Activated CD4-positive, alpha-beta T cell treated with anti-CD3 and anti-CD28 coated beads, Interleukin-2, amount 10 ng/mL, durations not matched to agents 24 days and 14 days (primary cell): ENCODE measurements at regions of chr16 and their contacts with region 1.

Region 1: GRCh38 chr16:67806428-67807147 is at the starts of genes RANBP10 and TSNAXIP1:
- DNase-seq: peak; percentile 99
- H3K4me3 Mint-ChIP-seq: peak within 1 kb of the TSS; percentile 97
- H3K27ac Mint-ChIP-seq: peak within 1 kb of the TSS; percentile 97
- H3K4me1 Mint-ChIP-seq: peaks cover 37% of the 10 kb centered on the region
- H3K27me3 Mint-ChIP-seq: peaks cover 2% of the 10 kb centered on the region
- total RNA-seq, gene RANBP10: 18.2 and 18.6 TPM in 2 replicates
- total RNA-seq, gene TSNAXIP1: 0.65 and 0.80 TPM in 2 replicates

Region 2: GRCh38 chr16:67470359-67470758 is 336.2 kb before region 1 on chr16:
- intact Hi-C with region 1: no loop called
- DNase-seq: no peak
- H3K4me3 Mint-ChIP-seq: no peak overlapping the region
- H3K27ac Mint-ChIP-seq: no peak overlapping the region
- H3K4me1 Mint-ChIP-seq: peaks cover 6% of the 10 kb centered on the region
- H3K27me3 Mint-ChIP-seq: no peaks in the 10 kb centered on the region

Region 3: GRCh38 chr16:67521095-67521804 is 285.3 kb before region 1 on chr16:
- intact Hi-C with region 1: loop called (anchors 10 kb)
- DNase-seq: peak; percentile 99
- H3K4me3 Mint-ChIP-seq: peak overlapping the region; percentile 89
- H3K27ac Mint-ChIP-seq: peak overlapping the region; percentile 100
- H3K4me1 Mint-ChIP-seq: peaks cover 30% of the 10 kb centered on the region
- H3K27me3 Mint-ChIP-seq: peaks cover 18% of the 10 kb centered on the region

Region 4: DNA sequence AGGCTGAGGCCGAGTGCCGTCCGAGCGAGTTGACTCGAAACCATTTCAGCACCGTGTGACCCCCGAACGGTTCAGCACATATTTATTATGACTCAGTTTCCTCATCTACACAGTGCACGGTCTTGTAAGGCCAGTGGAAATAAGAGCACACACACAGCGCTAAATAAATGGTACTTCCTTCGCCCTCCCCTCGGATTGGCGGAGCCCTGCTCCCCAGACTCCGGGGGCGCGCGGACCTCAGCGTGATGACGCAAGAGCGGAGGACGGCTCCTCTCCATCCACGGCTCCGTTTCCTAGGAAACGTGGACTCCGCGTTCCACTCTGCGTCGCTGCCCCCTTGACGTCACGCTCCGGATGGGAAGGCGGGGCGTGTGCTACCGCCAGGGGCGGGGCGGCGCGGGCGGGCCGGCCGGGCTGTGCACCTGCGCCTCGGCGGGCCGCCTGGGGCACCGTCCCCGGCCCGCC is 146.0 kb before region 1 on chr16 and contains the start of gene PARD6A:
- intact Hi-C with region 1: loop called (anchors 1 kb)
- DNase-seq: peak; percentile 99
- H3K4me3 Mint-ChIP-seq: peak within 1 kb of the TSS; percentile 92
- H3K27ac Mint-ChIP-seq: peak within 1 kb of the TSS; percentile 96
- H3K4me1 Mint-ChIP-seq: peaks cover 23% of the 10 kb centered on the region
- H3K27me3 Mint-ChIP-seq: no peaks in the 10 kb centered on the region
- total RNA-seq, gene PARD6A: 13.5 and 14.0 TPM in 2 replicates

Region 5: DNA sequence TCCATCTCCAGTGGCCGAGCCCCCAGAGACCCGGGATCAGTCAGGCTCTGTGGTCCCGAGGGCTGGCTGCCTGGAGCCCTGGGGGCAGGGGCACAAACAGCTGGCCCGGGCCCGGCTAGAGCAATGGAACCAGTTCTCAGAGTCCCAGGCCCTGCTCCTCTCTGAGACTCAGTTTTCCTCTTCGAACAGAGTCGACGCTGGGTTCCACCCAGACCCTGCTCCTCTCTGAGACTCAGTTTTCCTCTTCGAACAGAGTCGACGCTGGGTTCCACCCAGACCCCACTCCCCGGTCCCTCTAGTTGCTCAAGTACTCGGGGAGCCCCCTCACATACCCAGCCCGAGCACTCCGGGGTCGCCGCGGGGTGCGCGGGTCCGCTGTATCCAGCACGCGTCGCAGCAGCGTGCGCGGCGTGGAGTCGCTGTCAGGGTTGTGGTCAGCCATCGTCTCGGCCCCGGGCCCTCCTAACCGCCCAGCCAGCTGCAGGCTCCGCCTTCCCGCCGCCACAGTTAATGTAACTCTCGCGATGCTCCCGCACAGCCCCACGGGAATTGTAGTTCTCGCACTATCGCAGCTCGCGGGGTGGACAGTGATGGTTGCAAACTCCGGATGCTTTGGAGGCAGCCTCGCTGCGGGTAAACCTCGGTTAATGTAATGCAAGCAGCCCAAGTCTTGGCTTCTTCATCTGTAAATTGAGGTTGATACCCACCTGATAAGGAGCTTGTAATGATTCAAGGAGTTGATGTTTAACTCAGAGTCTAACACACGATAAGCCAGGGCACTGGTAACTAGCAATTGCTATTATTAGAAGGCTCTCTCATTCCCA is 27.0 kb after region 1 on chr16:
- intact Hi-C with region 1: loop called (anchors 1 kb)
- DNase-seq: peak; percentile 99
- H3K4me3 Mint-ChIP-seq: peak overlapping the region; percentile 98
- H3K27ac Mint-ChIP-seq: peak overlapping the region; percentile 93
- H3K4me1 Mint-ChIP-seq: peaks cover 8% of the 10 kb centered on the region
- H3K27me3 Mint-ChIP-seq: no peaks in the 10 kb centered on the region

Region 6: DNA sequence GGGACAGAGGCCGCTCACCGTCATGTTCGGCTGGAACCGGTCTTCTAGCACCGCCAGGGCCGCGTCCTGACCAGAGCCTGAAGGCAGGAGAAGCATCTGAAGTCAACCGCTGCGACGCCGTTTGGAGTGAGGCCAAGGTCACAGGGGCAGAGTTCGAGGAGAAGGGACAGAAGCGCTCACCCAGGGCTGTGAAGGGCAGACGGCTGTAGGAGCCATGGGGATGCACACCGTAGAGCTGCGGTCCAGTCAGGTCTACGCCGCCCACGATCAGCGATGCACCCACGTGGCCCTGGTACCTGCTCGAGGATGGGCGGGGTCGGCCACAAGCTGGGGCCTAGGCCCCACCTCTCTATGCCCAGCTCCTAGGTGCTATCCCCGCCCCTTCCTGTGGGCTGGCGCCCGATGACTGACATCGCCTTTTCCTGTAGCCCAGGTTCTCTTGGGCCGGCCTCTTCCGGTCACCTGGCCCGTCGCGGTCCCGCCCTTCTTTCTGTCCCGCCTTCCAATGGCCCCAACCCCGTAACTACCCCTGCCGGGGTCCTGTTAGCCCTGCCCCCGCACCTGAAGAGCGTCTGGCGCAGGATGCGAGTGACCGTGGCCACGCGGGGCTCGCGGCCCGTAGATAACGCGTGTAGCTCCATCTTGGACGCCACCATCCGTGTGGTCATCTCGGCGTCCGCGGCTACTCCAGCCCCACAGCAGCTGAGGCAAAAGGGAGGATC is 129.0 kb after region 1 on chr16:
- intact Hi-C with region 1: loop called (anchors 5 kb)
- DNase-seq: peak; percentile 98
- H3K4me3 Mint-ChIP-seq: peak overlapping the region; percentile 100
- H3K27ac Mint-ChIP-seq: peak overlapping the region; percentile 92
- H3K4me1 Mint-ChIP-seq: peaks cover 33% of the 10 kb centered on the region
- H3K27me3 Mint-ChIP-seq: no peaks in the 10 kb centered on the region

Region 7: DNA sequence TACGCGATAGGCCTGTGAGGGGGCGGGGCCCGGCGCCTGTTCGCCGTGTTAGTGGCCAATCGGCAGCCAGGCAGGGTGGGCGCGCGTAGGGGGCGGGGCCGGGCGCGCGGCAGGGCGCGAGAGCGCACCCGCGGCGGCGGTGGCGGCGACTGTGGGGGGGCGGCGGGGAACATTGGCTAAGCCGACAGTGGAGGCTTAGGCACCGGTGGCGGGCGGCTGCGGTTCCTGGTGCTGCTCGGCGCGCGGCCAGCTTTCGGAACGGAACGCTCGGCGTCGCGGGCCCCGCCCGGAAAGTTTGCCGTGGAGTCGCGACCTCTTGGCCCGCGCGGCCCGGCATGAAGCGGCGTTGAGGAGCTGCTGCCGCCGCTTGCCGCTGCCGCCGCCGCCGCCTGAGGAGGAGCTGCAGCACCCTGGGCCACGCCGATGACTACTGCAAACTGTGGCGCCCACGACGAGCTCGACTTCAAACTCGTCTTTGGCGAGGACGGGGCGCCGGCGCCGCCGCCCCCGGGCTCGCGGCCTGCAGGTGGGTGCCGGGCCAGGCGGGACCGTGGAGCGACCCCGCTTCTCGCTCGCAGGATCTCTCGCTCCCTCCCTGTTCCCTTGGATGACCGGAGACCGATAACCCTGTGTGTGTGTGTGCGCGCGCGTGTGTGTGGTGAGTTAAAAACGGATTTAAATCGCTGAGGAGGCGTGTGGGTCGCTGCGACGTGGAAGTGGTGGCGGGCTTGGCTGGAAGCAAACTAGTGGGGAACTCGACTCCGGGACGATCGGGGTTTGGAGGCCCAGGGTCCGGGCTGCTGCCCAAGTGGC is 278.9 kb after region 1 on chr16 and contains the start of gene NFATC3:
- intact Hi-C with region 1: loop called (anchors 1 kb)
- DNase-seq: peak; percentile 99
- H3K4me3 Mint-ChIP-seq: peak within 1 kb of the TSS; percentile 92
- H3K27ac Mint-ChIP-seq: peak within 1 kb of the TSS; percentile 97
- H3K4me1 Mint-ChIP-seq: peaks cover 58% of the 10 kb centered on the region
- H3K27me3 Mint-ChIP-seq: no peaks in the 10 kb centered on the region
- total RNA-seq, gene NFATC3: 143 and 146 TPM in 2 replicates